RWPE1 (cell line): ENCODE measurements at regions of chr13 and their contacts with region 1.

Region 1: GRCh38 chr13:27362064-27362883 is 62.1 kb upstream of the GTF3A start:
- DNase-seq: peak; percentile 87
- H3K27ac ChIP-seq: no peak overlapping the region
- CTCF ChIP-seq: peak; percentile 86

Region 2: DNA sequence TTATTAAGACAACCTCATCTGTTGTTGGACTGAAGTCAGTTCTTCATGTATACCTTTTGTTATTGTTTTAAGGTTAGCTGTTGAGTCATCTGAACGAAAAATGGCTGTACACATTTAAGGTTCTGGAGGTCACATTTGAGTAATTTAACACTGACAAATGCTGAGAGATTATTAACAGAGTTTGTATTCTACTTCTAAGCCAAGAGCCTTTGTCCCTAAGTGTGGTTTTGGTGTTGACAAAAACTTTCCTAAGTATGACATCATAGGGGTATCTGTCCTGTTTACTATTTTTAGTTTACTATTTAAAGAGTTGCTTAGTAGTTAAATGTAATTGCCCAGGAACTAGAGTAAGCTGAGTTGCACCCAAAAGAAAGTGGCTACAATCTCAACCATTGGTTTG is 1036.4 kb before region 1 on chr13:
- CTCF ChIA-PET with region 1: no interaction called
- POLR2A ChIA-PET with region 1: no interaction called
- DNase-seq: no peak
- H3K27ac ChIP-seq: no peak overlapping the region
- CTCF ChIP-seq: no peak

Region 3: GRCh38 chr13:26946684-26947343 is 415.5 kb before region 1 on chr13:
- CTCF ChIA-PET with region 1: interaction called, 31 read pairs
- POLR2A ChIA-PET with region 1: interaction called, 4 read pairs
- DNase-seq: peak; percentile 49
- H3K27ac ChIP-seq: no peak overlapping the region
- CTCF ChIP-seq: peak; percentile 74

Region 4: GRCh38 chr13:26971990-26972887 is 390.0 kb before region 1 on chr13:
- CTCF ChIA-PET with region 1: interaction called, 14 read pairs
- POLR2A ChIA-PET with region 1: no interaction called
- DNase-seq: peak; percentile 28
- H3K27ac ChIP-seq: no peak overlapping the region
- CTCF ChIP-seq: peak; percentile 43

Region 5: GRCh38 chr13:26985285-26985878 is 376.9 kb before region 1 on chr13:
- CTCF ChIA-PET with region 1: interaction called, 43 read pairs
- POLR2A ChIA-PET with region 1: no interaction called
- DNase-seq: peak; percentile 72
- H3K27ac ChIP-seq: no peak overlapping the region
- CTCF ChIP-seq: peak; percentile 63

Region 6: GRCh38 chr13:27424246-27425157 is 62.2 kb after region 1 on chr13 and contains the start of gene GTF3A:
- CTCF ChIA-PET with region 1: interaction called, 11 read pairs
- POLR2A ChIA-PET with region 1: no interaction called
- DNase-seq: peak; percentile 93
- H3K27ac ChIP-seq: peak within 1 kb of the TSS; percentile 93
- CTCF ChIP-seq: no peak

Region 7: DNA sequence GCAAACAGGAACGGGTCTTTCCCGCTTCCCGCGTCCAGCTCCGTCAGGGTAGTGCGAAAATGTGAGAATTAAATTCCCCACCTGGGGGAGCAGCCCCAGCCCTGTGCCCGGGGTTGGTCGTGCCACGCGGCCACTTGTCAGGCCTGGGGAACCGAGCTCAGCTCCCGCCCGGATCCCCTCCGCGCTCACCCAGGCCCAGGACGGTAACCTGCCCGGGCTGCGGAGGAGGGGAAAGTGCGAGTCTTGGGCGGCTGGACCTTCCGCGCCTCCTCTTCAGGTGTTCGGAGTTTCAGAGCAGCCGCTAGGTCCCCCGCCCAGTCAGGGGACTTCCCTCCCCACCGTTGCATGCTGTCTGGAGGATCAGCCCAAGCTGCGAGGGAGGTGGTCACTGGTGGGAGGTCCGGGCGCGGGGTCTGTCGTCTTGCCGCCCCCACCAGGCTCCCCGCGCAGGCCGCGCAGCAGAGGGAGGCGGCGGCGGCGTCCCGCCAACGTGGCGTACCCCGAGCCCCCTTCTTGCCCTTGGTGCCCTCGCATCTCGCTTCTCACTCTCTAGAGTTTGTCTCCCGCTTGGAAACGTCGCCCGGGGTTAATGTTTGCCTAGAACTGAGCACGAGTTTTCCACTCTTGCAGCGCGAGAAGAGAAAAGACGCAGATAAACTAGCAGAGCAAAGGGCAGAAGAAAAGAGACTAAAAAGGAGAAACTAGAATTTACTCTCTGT is 618.2 kb after region 1 on chr13:
- CTCF ChIA-PET with region 1: interaction called, 11 read pairs
- POLR2A ChIA-PET with region 1: no interaction called
- DNase-seq: no peak
- H3K27ac ChIP-seq: no peak overlapping the region
- CTCF ChIP-seq: no peak